Stomach (tissue), 19 donors: ENCODE measurements at regions of chr3 and their contacts with region 1.

Region 1: DNA sequence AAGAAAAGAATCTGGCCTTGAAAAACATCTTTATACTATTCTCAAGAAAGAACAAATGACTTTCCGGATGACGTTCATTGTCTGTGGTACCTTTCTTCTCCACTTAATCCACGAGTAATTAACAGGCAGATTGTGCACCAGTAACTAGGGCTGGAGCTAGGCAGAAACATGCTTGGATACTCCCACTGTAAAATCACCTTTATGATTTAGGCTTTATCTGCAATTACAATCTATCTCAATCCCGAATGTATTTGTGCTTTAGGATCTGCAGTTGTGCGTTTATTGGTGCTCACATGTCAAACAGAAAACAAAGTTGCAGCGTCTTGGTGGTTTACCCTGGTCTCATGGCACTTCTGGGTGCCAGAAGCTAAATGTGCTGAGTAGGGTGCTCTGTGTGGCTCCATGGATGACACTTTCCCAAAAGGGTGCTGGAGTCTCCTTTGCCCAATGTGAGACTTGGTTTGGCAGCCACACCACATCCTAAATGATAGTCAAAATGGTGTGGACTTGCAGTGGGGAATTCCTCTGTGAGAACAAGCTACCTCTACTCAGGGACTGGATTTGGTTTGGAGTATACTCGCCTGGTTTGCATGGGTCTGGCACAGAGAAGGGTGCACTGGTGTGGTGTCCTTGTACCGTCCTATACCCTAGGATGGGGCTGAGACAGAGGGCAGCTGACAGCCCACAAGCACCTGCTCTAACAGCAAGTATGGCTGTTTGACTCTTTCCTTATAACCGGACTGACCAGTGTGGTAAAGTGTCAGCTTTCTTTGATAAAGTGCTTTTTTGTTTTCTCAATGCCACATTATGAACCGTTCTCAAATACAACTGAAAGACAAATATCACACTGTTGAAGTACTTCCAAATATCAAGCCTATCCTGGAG is 7.7 kb downstream of the SERP1 start:
- DNase-seq: peak in 1 of 2 donors; percentile 78
- H3K4me3 ChIP-seq: no peak overlapping the region
- H3K27ac ChIP-seq: peak overlapping the region; percentile 52 to 77 (median 71)
- H3K4me1 ChIP-seq: peaks cover 13 to 63% (median 39%) of the 10 kb centered on the region in 4 donors
- H3K27me3 ChIP-seq: no peaks in the 10 kb centered on the region
- CTCF ChIP-seq: no peak
- EP300 ChIP-seq: no peak
- POLR2A ChIP-seq: no peak

Region 2: GRCh38 chr3:150449169-150449721 is 89.3 kb before region 1 on chr3:
- intact Hi-C with region 1: no loop called
- DNase-seq: no peak
- H3K4me3 ChIP-seq: no peak overlapping the region
- H3K27ac ChIP-seq: no peak overlapping the region
- H3K4me1 ChIP-seq: peaks cover 7 to 83% (median 60%) of the 10 kb centered on the region in 4 donors
- H3K27me3 ChIP-seq: no peaks in the 10 kb centered on the region
- CTCF ChIP-seq: no peak
- EP300 ChIP-seq: no peak
- POLR2A ChIP-seq: no peak

Region 3: GRCh38 chr3:150710097-150710496 is 171.5 kb after region 1 on chr3:
- intact Hi-C with region 1: loop called (anchors 10 kb)
- DNase-seq: no peak
- H3K4me3 ChIP-seq: no peak overlapping the region
- H3K27ac ChIP-seq: no peak overlapping the region
- H3K4me1 ChIP-seq: no peaks in the 10 kb centered on the region
- H3K27me3 ChIP-seq: no peaks in the 10 kb centered on the region
- CTCF ChIP-seq: no peak
- EP300 ChIP-seq: no peak
- POLR2A ChIP-seq: no peak